ENCODE measurements at regions of chr11 and their contacts with region 1.

Region 1: GRCh38 chr11:119481021-119481666 is 58.2 kb upstream of the THY1 start:
- DNase-seq: peak; percentile 80 to 84 (median 82)
- ATAC-seq: peak; percentile 93 to 99 (median 96)
- H3K4me3 ChIP-seq: no peak overlapping the region
- H3K27ac ChIP-seq: no peak overlapping the region
- H3K4me1 ChIP-seq: peaks cover 0 to 3% (median 0%) of the 10 kb centered on the region in 4 donors
- H3K27me3 ChIP-seq: no peaks in the 10 kb centered on the region
- CTCF ChIP-seq: peak in 3 of 4 donors; percentile 97 to 99 (median 99)
- POLR2A ChIP-seq: no peak

Region 2: GRCh38 chr11:119533921-119534736 is 53.0 kb after region 1 on chr11:
- intact Hi-C with region 1: loop called in 1 of 2 experiments (anchors 10 kb)
- DNase-seq: peak; percentile 73 to 79 (median 77)
- ATAC-seq: peak; percentile 88 to 95 (median 92)
- H3K4me3 ChIP-seq: no peak overlapping the region
- H3K27ac ChIP-seq: no peak overlapping the region
- H3K4me1 ChIP-seq: no peaks in the 10 kb centered on the region
- H3K27me3 ChIP-seq: no peaks in the 10 kb centered on the region
- CTCF ChIP-seq: peak; percentile 64 to 94 (median 90)
- POLR2A ChIP-seq: no peak

Region 3: DNA sequence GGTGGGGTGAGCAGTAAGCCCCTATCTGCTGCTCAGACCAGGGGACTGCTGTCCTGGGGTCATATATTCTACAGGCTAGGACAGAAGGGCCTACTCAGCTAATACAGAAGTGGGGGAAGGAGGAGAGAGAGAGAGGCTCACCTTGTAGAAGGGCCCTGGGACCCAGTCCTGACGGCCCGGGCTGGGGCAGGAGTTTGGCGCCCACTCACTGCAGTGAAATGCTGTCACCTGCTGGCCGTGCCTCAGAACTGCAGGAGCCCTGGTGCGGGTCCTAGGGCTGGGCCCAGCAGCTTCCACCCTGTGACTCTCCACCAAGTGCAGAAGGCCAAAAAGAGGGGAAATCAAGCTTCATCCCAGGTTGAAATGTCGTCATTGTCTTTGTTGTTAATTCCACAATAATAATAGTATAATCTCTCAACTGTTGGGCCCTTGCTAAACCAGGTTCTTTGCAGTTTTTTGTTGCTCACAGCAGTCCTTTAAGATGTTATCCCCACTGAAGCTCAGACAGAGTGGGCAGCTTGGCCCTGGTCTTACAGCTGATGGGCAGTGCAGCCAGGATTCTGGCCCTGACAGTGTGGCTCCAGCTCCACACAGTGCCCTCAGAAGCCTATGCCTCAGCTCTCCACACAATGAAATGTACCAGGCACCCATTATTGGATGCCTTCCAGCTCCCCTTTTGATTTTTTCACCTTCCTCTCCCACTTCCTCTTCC is 627.2 kb after region 1 on chr11:
- intact Hi-C with region 1: loop called (anchors 5 to 10 kb)
- DNase-seq: peak; percentile 71 to 74 (median 74)
- ATAC-seq: peak; percentile 89 to 98 (median 93)
- H3K4me3 ChIP-seq: no peak overlapping the region
- H3K27ac ChIP-seq: no peak overlapping the region
- H3K4me1 ChIP-seq: no peaks in the 10 kb centered on the region
- H3K27me3 ChIP-seq: no peaks in the 10 kb centered on the region
- CTCF ChIP-seq: peak; percentile 98 to 100 (median 99)
- POLR2A ChIP-seq: no peak

Measured in right lobe of liver (tissue), 6 donors.